Mammary epithelial cell (primary cell): ENCODE measurements at regions of chr17 and their contacts with region 1.

Region 1: DNA sequence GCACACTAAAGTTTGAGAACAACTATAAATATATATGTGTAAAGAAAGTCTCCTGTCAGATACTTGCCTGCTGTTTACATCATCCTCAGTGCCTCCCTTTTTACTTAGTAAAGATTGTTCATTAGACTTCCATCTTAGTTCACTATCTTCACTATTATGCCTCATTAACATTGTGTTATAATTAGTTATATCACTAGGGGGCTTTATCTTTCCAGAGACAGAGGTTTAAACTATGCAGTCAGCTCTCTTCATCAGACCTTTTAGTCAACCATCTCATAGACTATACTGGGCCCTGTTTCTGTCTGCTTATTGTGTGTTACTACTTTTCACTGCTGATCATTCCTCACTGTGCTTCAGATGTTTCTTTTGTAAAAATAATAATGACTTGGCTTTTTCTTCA is 630.8 kb upstream of the KIF2B start:
- DNase-seq: no peak
- H3K4me3 ChIP-seq: no peak overlapping the region
- H3K27ac ChIP-seq: no peak overlapping the region
- H3K4me1 ChIP-seq: no peaks in the 10 kb centered on the region
- H3K27me3 ChIP-seq: no peaks in the 10 kb centered on the region
- CTCF ChIP-seq: peak in 1 of 2 donors; percentile 22

Region 2: GRCh38 chr17:52957411-52957810 is 234.5 kb before region 1 on chr17:
- CTCF ChIA-PET with region 1: no interaction called
- dilution Hi-C with region 1: no loop called
- in situ Hi-C with region 1: no loop called
- intact Hi-C with region 1: no loop called
- DNase-seq: no peak
- H3K4me3 ChIP-seq: no peak overlapping the region
- H3K27ac ChIP-seq: no peak overlapping the region
- H3K4me1 ChIP-seq: no peaks in the 10 kb centered on the region
- H3K27me3 ChIP-seq: no peaks in the 10 kb centered on the region
- CTCF ChIP-seq: no peak

Region 3: GRCh38 chr17:53707566-53707965 is 515.7 kb after region 1 on chr17:
- CTCF ChIA-PET with region 1: no interaction called
- dilution Hi-C with region 1: no loop called
- in situ Hi-C with region 1: no loop called
- intact Hi-C with region 1: loop called (anchors 2 kb)
- DNase-seq: no peak
- H3K4me3 ChIP-seq: no peak overlapping the region
- H3K27ac ChIP-seq: no peak overlapping the region
- H3K4me1 ChIP-seq: no peaks in the 10 kb centered on the region
- H3K27me3 ChIP-seq: no peaks in the 10 kb centered on the region
- CTCF ChIP-seq: no peak